Colonic mucosa (tissue), 4 donors: ENCODE measurements at regions of chr11 and their contacts with region 1.

Region 1: DNA sequence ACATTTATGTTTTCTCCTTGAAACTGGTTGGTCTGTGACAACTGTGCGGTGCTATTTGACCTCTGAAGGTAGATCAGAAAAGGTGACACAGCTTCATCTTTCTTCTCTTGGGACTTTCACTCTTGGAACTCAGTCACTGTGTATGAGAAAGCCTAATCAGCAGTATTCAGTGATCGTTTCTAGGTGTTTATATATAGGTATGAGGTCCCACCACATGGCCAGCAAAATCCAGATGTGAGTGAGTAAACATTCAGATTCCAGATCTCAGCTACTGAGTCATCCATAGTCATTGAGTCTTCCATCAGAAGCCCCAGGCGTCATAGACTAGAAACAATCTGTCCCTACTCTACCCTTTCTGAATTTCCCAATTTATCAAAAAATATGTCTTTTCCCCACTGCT is 117.3 kb upstream of the CTSC start:
- DNase-seq: no peak
- H3K4me3 ChIP-seq: no peak overlapping the region
- H3K27ac ChIP-seq: no peak overlapping the region
- H3K4me1 ChIP-seq: no peaks in the 10 kb centered on the region
- H3K27me3 ChIP-seq: no peaks in the 10 kb centered on the region
- CTCF ChIP-seq: no peak

Region 2: GRCh38 chr11:88231894-88232482 is 222.9 kb before region 1 on chr11:
- intact Hi-C with region 1: loop called (anchors 10 kb)
- DNase-seq: no peak
- H3K4me3 ChIP-seq: no peak overlapping the region
- H3K27ac ChIP-seq: no peak overlapping the region
- H3K4me1 ChIP-seq: no peaks in the 10 kb centered on the region
- H3K27me3 ChIP-seq: no peaks in the 10 kb centered on the region
- CTCF ChIP-seq: peak; percentile 50

Region 3: GRCh38 chr11:88357323-88358039 is 97.4 kb before region 1 on chr11:
- intact Hi-C with region 1: no loop called
- DNase-seq: no peak
- H3K4me3 ChIP-seq: no peak overlapping the region
- H3K27ac ChIP-seq: peak overlapping the region; percentile 6
- H3K4me1 ChIP-seq: no peaks in the 10 kb centered on the region
- H3K27me3 ChIP-seq: no peaks in the 10 kb centered on the region
- CTCF ChIP-seq: no peak

Region 4: DNA sequence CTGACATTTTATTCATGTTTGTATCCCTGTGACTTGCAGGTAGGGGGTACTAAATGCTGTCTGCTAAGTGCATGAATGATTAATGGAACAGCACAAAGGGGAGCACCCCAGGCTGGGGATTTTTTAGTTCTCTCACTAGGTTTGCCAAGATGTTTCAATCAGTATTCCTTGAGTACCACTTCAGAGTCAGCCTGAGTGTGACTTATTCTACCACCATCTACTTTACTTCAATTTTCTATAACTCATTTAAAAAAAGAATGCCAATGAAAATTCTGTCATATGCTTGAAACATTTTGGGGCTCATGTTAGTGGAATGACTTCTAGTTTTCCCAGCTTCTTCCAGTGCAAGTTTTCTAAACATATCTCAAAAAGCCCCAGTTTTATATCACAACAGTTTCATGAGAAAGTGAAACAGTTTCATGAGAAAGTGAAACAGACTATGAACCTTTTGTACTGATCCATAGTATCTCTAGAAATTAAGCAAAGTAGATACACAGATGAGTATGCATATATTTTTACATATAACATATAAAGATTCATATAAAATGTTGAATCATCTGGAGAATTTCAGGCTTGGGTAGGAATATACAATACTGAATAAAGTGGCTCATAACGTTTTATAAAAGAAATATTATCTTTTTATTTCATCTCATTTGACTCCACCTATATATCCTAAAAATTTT is 358.5 kb after region 1 on chr11:
- intact Hi-C with region 1: no loop called
- DNase-seq: no peak
- H3K4me3 ChIP-seq: no peak overlapping the region
- H3K27ac ChIP-seq: no peak overlapping the region
- H3K4me1 ChIP-seq: no peaks in the 10 kb centered on the region
- H3K27me3 ChIP-seq: no peaks in the 10 kb centered on the region
- CTCF ChIP-seq: no peak